Prostate gland (tissue), 2 donors: ENCODE measurements at regions of chr17 and their contacts with region 1.

Region 1: GRCh38 chr17:78112518-78113226 is 15.9 kb downstream of the TMC6 start:
- DNase-seq: peak; percentile 50
- H3K4me3 ChIP-seq: no peak overlapping the region
- H3K27ac ChIP-seq: peak overlapping the region in 1 of 2 donors; percentile 89
- H3K4me1 ChIP-seq: peaks cover 23% of the 10 kb centered on the region
- H3K27me3 ChIP-seq: no peaks in the 10 kb centered on the region
- CTCF ChIP-seq: peak; percentile 97 to 100 (median 98)
- POLR2A ChIP-seq: no peak

Region 2: GRCh38 chr17:78159575-78160158 is 47.0 kb after region 1 on chr17:
- intact Hi-C with region 1: no loop called
- DNase-seq: peak; percentile 68
- H3K4me3 ChIP-seq: no peak overlapping the region
- H3K27ac ChIP-seq: peak overlapping the region; percentile 6 to 49
- H3K4me1 ChIP-seq: peaks cover 5% of the 10 kb centered on the region
- H3K27me3 ChIP-seq: no peaks in the 10 kb centered on the region
- CTCF ChIP-seq: no peak
- POLR2A ChIP-seq: no peak

Region 3: GRCh38 chr17:78176548-78177025 is 63.9 kb after region 1 on chr17:
- intact Hi-C with region 1: loop called (anchors 2 kb)
- DNase-seq: peak; percentile 73
- H3K4me3 ChIP-seq: no peak overlapping the region
- H3K27ac ChIP-seq: peak overlapping the region in 1 of 2 donors; percentile 23
- H3K4me1 ChIP-seq: peaks cover 18% of the 10 kb centered on the region
- H3K27me3 ChIP-seq: no peaks in the 10 kb centered on the region
- CTCF ChIP-seq: peak; percentile 56 to 93 (median 79)
- POLR2A ChIP-seq: no peak

Region 4: DNA sequence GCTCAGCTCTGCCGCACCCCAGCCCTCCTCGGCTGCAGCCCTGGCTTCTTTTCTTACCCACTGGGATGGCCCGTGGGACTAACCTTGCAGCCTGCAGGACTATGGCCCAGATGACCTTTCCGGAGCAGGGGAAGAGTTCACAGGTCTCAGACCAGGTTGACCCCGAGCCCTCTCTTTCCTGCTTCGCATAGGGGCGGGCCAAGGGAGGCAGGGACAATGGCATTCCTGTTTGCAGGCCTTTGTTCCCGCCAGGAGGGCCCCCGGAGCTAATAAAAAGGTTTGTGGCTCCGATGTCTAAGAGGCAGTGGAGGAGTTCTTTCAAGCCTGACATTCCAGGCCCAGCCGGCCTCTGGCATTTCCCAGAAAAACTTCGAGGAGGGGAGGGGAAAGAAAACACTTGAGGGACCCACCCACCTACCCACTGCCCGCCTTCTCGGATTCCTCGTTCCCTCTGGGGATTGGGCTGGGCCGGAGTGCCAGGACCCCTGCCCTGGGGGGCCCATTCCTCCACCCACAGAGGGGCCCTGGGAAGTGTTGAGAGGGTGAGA is 253.0 kb after region 1 on chr17:
- intact Hi-C with region 1: no loop called
- DNase-seq: no peak
- H3K4me3 ChIP-seq: no peak overlapping the region
- H3K27ac ChIP-seq: peak overlapping the region; percentile 8 to 18
- H3K4me1 ChIP-seq: peaks cover under 1% of the 10 kb centered on the region
- H3K27me3 ChIP-seq: no peaks in the 10 kb centered on the region
- CTCF ChIP-seq: no peak
- POLR2A ChIP-seq: no peak